ENCODE measurements at regions of chr1 and their contacts with region 1.

Region 1: GRCh38 chr1:183471743-183472487 is 384 bp upstream of the SMG7 start:
- DNase-seq: peak; percentile 91
- H3K4me3 Mint-ChIP-seq: peak overlapping the region; percentile 90
- H3K27ac Mint-ChIP-seq: peak overlapping the region; percentile 99
- H3K4me1 Mint-ChIP-seq: peaks cover 28% of the 10 kb centered on the region
- H3K27me3 Mint-ChIP-seq: peaks cover 2% of the 10 kb centered on the region

Region 2: DNA sequence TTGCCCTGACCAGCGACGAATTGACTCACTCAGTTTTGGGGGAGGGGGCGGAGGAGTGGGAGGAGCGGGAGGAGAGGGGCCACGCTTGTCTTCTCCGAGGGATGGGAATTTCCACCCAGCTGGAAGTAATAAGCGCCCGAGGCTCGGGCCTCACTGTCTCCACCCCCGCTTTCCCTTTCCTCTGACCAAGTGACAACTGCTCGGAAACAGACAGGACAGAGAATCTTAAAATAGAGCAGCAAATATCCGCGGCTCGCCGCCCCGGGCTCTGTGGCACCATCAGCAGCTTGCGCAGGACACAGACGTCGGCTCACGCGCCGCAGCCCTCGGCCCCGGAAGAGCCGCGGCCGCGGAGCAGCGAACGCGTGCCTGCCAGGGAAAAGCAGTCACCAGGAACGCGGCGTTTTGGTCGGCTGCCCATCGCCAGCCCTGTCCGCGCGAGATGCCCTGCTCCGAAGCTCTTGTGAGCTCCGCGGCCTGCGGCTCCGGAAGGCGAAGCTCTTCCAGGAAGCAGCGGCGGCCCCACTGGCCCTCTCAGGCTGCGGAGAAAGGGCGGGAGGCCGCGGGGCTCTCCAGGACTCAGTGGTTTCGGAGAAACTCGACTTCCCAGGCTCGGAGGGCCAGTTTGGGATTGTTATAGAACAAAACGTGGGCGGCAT is 857.0 kb before region 1 on chr1:
- intact Hi-C with region 1: loop called (anchors 5 kb)
- DNase-seq: peak; percentile 34
- H3K4me3 Mint-ChIP-seq: peak overlapping the region; percentile 81
- H3K27ac Mint-ChIP-seq: peak overlapping the region; percentile 88
- H3K4me1 Mint-ChIP-seq: peaks cover 89% of the 10 kb centered on the region
- H3K27me3 Mint-ChIP-seq: peaks cover 16% of the 10 kb centered on the region

Region 3: GRCh38 chr1:183590244-183591191 is 118.6 kb after region 1 on chr1 and contains the start of gene NCF2:
- intact Hi-C with region 1: loop called (anchors 1 kb)
- DNase-seq: peak; percentile 68
- H3K4me3 Mint-ChIP-seq: peak within 1 kb of the TSS; percentile 69
- H3K27ac Mint-ChIP-seq: peak within 1 kb of the TSS; percentile 84
- H3K4me1 Mint-ChIP-seq: peaks cover 50% of the 10 kb centered on the region
- H3K27me3 Mint-ChIP-seq: peaks cover 2% of the 10 kb centered on the region
- total RNA-seq, gene NCF2: 4.8 and 5.9 TPM in 2 replicates

Region 4: GRCh38 chr1:183655562-183656075 is 183.7 kb after region 1 on chr1:
- intact Hi-C with region 1: loop called (anchors 1 kb)
- DNase-seq: peak; percentile 52
- H3K4me3 Mint-ChIP-seq: no peak overlapping the region
- H3K27ac Mint-ChIP-seq: peak overlapping the region; percentile 0
- H3K4me1 Mint-ChIP-seq: peaks cover 48% of the 10 kb centered on the region
- H3K27me3 Mint-ChIP-seq: no peaks in the 10 kb centered on the region

Region 5: DNA sequence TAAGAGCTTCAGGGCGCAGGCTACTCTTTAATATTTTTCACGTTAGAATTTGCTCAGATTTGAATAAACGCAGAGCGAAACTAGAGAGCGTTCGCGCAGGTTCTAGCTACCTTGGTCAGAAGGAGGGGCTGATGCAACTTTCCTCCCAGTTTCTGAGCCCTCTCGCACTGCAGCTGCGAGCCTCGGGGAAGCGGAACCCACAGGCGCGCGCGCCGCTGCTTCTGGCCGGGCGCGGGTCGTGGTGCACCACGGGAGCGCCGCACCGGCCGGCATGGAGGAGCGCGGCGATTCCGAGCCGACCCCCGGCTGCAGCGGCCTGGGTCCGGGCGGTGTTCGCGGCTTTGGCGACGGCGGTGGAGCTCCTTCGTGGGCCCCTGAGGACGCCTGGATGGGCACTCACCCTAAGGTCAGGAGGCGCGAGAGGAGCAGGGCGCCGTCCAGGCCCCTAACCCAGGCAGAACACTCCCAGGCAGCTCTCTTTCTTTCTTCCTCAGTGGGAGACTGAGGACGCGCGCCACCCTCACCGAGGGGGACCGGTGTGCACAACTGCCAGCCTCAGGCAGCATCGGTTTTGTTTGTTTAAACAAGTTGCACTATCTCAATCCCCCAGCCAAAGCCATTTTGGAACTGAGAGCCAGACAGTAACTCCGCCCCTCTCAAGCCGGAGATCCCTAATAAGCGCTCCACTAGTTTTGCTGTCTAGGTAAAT is 579.7 kb after region 1 on chr1 and contains the start of gene TSEN15:
- intact Hi-C with region 1: loop called (anchors 5 kb)
- DNase-seq: peak; percentile 71
- H3K4me3 Mint-ChIP-seq: peak within 1 kb of the TSS; percentile 99
- H3K27ac Mint-ChIP-seq: peak within 1 kb of the TSS; percentile 99
- H3K4me1 Mint-ChIP-seq: peaks cover 40% of the 10 kb centered on the region
- H3K27me3 Mint-ChIP-seq: peaks cover 28% of the 10 kb centered on the region
- total RNA-seq, gene TSEN15: 49.8 and 50.2 TPM in 2 replicates

Measured in activated T-helper 1 cell treated with anti-CD3 and anti-CD28 coated beads, Interleukin-12 subunit alpha, Interleukin-12 subunit beta, Interleukin-2, Interleukin-4 antibody, amounts not matched to agents 30 ng/mL and 10 ng/mL and 1 ng/mL, durations not matched to agents 14 hours and 24 hours and 36 hours (primary cell).